GM12878 (cell line): ENCODE measurements at regions of chr9 and their contacts with region 1.

Region 1: DNA sequence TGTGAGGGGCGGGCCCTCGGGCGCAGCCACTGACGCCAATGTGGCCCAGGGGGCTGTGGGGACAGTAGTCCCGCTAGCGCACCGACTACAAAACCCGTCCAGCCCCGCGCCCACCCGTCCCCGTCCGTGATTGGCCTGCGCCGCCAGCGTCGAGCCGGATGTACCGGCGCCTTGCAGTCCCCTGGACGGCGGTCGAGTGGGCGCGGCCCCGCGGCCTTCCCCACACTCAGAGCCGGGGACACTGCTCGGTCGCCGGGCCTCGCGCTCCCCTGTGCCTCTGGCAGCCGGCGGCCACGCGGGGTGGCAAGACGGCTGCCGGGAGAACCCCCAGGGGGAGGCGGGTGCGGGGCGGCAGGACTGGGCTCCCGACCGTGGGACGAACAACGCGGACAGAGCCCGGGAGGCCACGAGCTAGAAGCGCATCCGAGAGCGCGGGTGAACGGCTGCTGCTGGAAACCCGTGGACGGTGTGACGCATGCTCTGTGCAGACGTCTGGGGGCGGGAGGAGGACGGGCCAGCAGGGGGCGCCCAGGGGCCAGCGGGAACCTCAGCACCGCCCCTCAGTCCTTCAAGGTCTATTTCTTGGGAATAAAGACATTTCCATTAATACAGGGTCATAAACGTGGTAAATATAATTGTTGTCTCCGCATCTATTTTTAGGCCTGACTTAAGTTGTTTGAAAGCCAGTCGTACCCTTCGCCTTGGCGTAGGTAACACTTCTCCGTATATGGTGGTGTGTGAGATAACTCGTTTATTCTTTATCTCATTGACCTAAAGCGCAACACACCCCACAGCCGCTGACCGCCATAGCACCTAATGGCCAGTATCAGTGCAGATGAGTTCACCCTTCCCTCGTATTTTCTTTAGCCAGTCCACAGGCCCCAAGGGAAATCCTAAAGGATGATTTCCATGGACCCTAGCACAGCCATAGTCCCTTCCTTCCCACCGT is 629 bp upstream of the BICD2 start:
- DNase-seq: peak; percentile 86
- ATAC-seq: peak; percentile 93
- H3K4me3 ChIP-seq: peak overlapping the region; percentile 77
- H3K27ac ChIP-seq: peak overlapping the region; percentile 89
- H3K4me1 ChIP-seq: peaks cover 19% of the 10 kb centered on the region
- H3K27me3 ChIP-seq: no peaks in the 10 kb centered on the region
- CTCF ChIP-seq: peak; percentile 95 to 98 (median 96)
- EP300 ChIP-seq: no peak
- POLR2A ChIP-seq: peak; percentile 94
- RAD21 ChIP-seq: peak; percentile 48

Region 2: DNA sequence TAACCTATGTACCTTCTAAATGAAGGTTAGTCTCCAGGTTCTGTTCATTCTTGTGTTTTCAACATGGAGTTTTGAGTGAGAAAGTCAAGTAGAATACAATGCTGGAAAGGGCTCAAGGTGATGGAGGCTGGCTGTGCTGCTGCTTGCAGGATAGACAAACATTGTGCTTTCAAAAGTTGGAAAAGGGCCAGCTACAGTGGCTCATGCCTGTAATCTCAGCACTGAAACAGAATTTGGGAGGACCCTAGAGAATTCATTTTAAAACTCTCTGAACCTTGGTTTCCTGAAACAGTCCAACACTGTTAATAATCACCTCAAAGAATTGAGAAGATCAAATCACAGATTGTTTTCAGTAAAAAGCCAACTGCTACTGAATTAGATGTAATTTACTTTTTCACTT is 456.4 kb before region 1 on chr9:
- CTCF ChIA-PET with region 1: no interaction called
- POLR2A ChIA-PET with region 1: no interaction called
- RAD21 ChIA-PET with region 1: no interaction called
- SMC1A ChIA-PET with region 1: no interaction called
- in situ Hi-C with region 1: no loop called
- intact Hi-C with region 1: no loop called
- DNase-seq: no peak
- ATAC-seq: no peak
- H3K4me3 ChIP-seq: no peak overlapping the region
- H3K27ac ChIP-seq: no peak overlapping the region
- H3K4me1 ChIP-seq: peaks cover 3% of the 10 kb centered on the region; the same call in 1 of the 2 replicates
- H3K27me3 ChIP-seq: no peaks in the 10 kb centered on the region
- CTCF ChIP-seq: no peak
- EP300 ChIP-seq: no peak
- POLR2A ChIP-seq: no peak
- RAD21 ChIP-seq: no peak

Region 3: DNA sequence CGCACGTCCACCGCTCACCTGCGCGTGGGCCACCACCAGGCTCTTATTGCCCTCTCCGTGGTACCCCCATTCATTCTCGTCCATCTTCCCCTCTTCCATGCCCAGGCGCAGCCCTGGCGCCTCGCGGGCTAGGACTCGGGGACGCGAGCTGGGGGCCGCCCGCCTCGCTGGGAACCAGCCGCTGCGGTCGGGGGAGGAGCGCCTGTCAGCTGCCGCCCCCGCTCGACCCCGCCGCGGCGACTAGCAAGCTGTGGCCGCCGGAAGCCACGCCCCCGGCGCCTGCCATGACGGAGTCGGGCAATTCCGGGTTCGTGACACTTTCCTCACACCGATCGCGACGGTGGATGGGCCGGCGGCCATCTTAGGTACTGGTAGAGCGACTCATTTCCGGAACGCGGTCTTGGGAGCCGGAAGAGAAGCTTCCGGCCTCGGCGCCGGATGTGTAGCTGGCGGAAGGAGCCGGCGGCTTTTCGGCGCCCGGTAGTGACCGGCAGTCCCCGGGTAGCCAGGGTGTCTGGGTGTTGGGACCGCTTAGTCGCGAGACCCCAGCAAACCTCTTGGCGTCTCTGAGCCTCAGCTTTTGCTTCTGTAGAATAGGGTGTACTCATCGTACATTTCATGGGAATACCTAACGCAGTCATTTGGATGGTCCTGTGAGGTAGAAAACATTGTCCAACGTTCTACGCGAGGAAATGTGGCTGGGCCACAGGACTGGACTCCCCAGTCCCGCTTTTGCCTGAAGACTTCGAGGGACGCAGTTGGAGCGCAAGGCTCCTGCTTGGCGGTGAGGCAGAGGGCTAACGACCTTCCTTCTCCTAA is 95.2 kb before region 1 on chr9 and contains the start of gene IPPK:
- CTCF ChIA-PET with region 1: interaction called, 12 read pairs
- POLR2A ChIA-PET with region 1: interaction called, 5 read pairs
- RAD21 ChIA-PET with region 1: interaction called, 8 read pairs
- SMC1A ChIA-PET with region 1: interaction called, 5 read pairs
- in situ Hi-C with region 1: no loop called
- intact Hi-C with region 1: loop called (anchors 2 kb)
- DNase-seq: peak; percentile 91
- ATAC-seq: peak; percentile 91
- H3K4me3 ChIP-seq: peak within 1 kb of the TSS; percentile 91
- H3K27ac ChIP-seq: peak within 1 kb of the TSS; percentile 94
- H3K4me1 ChIP-seq: peaks cover 18% of the 10 kb centered on the region
- H3K27me3 ChIP-seq: no peaks in the 10 kb centered on the region
- CTCF ChIP-seq: no peak
- EP300 ChIP-seq: no peak
- POLR2A ChIP-seq: peak; percentile 90
- RAD21 ChIP-seq: no peak
- polyA plus RNA-seq, gene IPPK: 2.1 to 4.0 TPM

Region 4: DNA sequence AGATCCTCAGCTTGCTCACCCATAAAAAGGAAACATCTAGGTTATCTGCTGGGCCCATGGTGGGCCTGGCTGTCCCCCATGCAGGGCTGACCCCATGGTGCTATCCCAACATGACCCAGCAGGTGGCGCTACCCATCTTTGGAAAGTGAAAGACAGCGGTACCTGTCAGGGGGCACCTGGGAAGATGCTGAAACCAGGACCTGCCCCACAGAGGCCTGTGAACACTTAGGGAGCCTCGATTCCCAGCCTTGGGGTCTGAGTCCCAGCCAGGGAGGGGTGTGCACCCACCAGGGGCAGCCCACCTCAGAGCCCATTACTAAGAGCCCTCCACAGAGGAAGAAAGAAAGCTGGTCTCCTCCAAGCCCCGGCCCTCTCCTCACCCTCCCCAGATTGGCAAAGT is 48.7 kb before region 1 on chr9:
- CTCF ChIA-PET with region 1: interaction called, 8 read pairs
- POLR2A ChIA-PET with region 1: no interaction called
- RAD21 ChIA-PET with region 1: interaction called, 3 read pairs
- SMC1A ChIA-PET with region 1: no interaction called
- in situ Hi-C with region 1: no loop called
- intact Hi-C with region 1: loop called (anchors 1 kb)
- DNase-seq: no peak
- ATAC-seq: peak; percentile 90
- H3K4me3 ChIP-seq: no peak overlapping the region
- H3K27ac ChIP-seq: peak overlapping the region; percentile 58
- H3K4me1 ChIP-seq: peaks cover 46% of the 10 kb centered on the region
- H3K27me3 ChIP-seq: no peaks in the 10 kb centered on the region
- CTCF ChIP-seq: peak; percentile 85 to 93 (median 92)
- EP300 ChIP-seq: no peak
- POLR2A ChIP-seq: no peak
- RAD21 ChIP-seq: peak; percentile 92

Region 5: DNA sequence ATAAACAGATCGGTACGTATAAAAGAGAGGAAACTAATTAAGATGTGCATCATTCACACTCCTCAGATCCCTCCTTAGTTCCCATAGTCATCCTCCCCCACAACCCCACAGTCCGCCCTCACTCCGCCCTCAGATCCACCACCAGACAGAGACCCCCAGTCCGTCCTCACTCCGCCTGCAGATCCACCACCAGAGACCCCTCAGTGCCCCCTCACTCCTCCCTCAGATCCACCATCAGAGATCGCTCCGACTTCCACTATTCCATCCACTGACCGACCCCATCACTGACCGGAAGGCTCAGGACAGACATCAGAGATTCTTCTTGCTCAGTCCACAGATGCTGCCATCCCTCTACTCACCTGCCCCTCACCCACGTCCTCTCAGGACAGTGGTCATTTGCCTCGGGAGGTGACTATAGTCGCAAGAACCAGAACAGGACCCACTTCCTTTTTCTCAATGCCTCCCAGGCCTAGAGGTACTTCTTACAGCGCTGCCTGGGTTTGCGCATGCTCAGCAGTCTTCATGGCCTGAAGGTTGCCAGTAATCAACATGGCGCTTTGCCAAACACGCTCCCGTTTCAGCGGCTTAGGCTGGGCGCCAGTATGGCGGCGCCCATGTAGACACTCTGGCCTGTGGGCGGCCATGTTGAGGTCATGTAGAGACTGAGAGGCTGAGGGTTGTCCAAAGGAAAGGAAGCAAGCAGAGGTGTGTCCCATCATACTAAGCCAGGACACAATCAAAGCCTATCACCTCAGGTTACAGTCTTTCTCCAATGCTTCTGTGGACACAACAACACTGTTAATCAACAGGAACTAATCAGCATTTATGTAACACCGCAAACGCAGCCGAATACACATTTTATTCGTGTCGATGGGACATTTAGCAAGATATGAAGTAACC is 112.5 kb after region 1 on chr9 and contains the start of gene ZNF484:
- CTCF ChIA-PET with region 1: no interaction called
- POLR2A ChIA-PET with region 1: no interaction called
- RAD21 ChIA-PET with region 1: no interaction called
- SMC1A ChIA-PET with region 1: no interaction called
- in situ Hi-C with region 1: no loop called
- intact Hi-C with region 1: loop called (anchors 5 kb)
- DNase-seq: peak; percentile 96
- ATAC-seq: peak; percentile 98
- H3K4me3 ChIP-seq: peak within 1 kb of the TSS; percentile 89
- H3K27ac ChIP-seq: peak within 1 kb of the TSS; percentile 84
- H3K4me1 ChIP-seq: peaks cover 4% of the 10 kb centered on the region; the same call in 1 of the 2 replicates
- H3K27me3 ChIP-seq: no peaks in the 10 kb centered on the region
- CTCF ChIP-seq: no peak
- EP300 ChIP-seq: no peak
- POLR2A ChIP-seq: peak; percentile 84
- RAD21 ChIP-seq: no peak
- polyA plus RNA-seq, gene ZNF484: 0.95 to 1.4 TPM